Vagina (tissue), 2 donors: ENCODE measurements at regions of chr6 and their contacts with region 1.

Region 1: DNA sequence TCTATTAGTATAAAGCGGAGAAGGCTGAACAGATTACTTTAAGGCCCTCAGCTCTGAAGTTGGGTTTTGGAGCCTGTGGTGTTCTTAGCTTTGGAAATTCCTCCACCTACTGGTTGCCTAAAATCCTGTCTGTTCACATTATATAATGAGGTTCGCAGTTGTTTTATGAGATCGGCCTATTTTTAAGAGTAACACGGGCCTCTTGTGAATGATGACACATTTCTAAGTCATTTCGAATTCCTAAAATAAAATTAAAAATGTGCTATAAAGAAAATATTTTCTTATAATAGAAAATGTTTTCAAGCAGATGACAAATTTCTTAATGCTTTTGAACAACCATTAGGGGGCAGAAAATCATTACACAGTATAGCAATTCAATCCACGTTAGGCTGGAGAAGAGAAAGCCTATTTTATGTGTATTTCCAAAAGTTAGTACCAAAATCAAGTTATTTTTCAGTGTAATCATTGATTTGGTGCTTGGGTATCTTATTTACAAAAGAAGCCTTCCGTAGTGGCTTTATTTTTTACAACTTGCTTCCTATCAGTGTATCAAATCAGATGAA is 15.8 kb upstream of the FAM8A1 start:
- DNase-seq: no peak
- H3K4me3 ChIP-seq: no peak overlapping the region
- H3K27ac ChIP-seq: peak overlapping the region; percentile 57
- H3K4me1 ChIP-seq: peaks cover 6% of the 10 kb centered on the region
- H3K27me3 ChIP-seq: no peaks in the 10 kb centered on the region
- CTCF ChIP-seq: peak; percentile 68 to 99 (median 92)
- POLR2A ChIP-seq: no peak

Region 2: GRCh38 chr6:17156112-17156921 is 428.0 kb before region 1 on chr6:
- intact Hi-C with region 1: loop called (anchors 5 kb)
- DNase-seq: no peak
- H3K4me3 ChIP-seq: no peak overlapping the region
- H3K27ac ChIP-seq: no peak overlapping the region
- H3K4me1 ChIP-seq: no peaks in the 10 kb centered on the region
- H3K27me3 ChIP-seq: no peaks in the 10 kb centered on the region
- CTCF ChIP-seq: peak; percentile 63 to 93 (median 85)
- POLR2A ChIP-seq: no peak

Region 3: DNA sequence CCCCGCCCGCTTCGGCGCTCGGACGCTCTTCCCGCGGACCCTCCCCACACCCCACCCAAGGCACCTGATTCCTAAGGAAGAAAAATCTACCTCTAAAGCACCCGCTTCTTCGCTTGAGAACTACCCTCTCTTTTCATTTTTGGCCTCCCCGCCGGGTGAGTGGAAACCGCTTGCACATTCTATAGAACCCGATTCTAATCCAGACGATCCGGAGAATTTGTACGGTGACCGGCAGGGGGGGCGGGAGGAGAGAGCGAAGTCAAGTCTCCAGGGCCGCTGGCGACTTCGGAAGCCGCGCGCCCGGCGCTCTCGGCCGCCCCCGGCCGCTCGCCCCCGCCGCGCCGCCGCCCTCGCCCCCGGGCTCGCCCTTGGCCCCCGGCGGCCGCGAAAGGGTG is 303.2 kb before region 1 on chr6 and contains the start of gene RBM24:
- intact Hi-C with region 1: loop called (anchors 10 kb)
- DNase-seq: no peak
- H3K4me3 ChIP-seq: peak within 1 kb of the TSS; percentile 84 to 90
- H3K27ac ChIP-seq: peak within 1 kb of the TSS; percentile 90
- H3K4me1 ChIP-seq: peaks cover 6% of the 10 kb centered on the region
- H3K27me3 ChIP-seq: no peaks in the 10 kb centered on the region
- CTCF ChIP-seq: peak in 1 of 3 experiments; percentile 18
- POLR2A ChIP-seq: no peak
- total RNA-seq, gene RBM24: 2.7 TPM

Region 4: DNA sequence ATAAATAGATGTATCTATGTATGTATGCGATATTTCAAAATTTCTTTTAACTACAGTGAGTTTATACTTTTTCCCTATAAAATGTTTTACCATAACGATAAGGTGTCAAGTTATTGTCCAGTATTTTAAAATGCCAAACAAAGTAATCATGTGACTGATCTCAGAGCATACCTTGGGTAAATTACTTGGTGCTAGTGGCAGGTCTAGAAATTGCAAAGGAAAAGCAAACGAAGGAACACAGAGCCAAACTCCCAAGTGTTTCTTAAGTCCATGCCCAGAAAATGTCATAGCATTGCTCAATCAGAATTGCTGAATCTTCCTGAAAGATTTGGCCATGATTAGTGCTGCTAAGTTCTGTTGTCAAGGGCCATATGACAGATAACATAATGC is 113.4 kb before region 1 on chr6:
- intact Hi-C with region 1: loop called (anchors 10 kb)
- DNase-seq: no peak
- H3K4me3 ChIP-seq: no peak overlapping the region
- H3K27ac ChIP-seq: peak overlapping the region; percentile 78
- H3K4me1 ChIP-seq: peaks cover 42% of the 10 kb centered on the region
- H3K27me3 ChIP-seq: no peaks in the 10 kb centered on the region
- CTCF ChIP-seq: peak in 1 of 3 experiments; percentile 23
- POLR2A ChIP-seq: no peak